ENCODE measurements at regions of chr3 and their contacts with region 1.

Region 1: DNA sequence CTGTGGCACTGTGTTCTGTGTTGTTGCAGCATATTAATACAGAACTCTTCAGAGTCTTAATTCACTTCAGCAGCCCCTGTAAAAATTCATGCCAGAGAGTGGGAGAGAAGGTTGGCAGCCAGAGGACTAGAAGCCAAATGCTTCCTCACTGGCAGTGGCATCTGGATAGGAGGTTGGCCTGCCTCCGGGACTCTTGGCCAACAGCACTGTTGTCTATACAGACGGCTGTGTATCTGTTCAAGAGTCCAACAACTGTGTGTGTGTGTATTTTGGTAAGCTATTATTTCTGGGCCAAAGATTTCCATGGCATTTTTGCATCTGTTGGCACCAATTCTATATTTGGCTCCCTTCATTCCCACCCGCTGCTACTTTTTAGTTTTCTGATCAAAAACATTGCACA is 156.0 kb upstream of the SOX2 start:
- DNase-seq: peak; percentile 66
- ATAC-seq: peak; percentile 76

Region 2: DNA sequence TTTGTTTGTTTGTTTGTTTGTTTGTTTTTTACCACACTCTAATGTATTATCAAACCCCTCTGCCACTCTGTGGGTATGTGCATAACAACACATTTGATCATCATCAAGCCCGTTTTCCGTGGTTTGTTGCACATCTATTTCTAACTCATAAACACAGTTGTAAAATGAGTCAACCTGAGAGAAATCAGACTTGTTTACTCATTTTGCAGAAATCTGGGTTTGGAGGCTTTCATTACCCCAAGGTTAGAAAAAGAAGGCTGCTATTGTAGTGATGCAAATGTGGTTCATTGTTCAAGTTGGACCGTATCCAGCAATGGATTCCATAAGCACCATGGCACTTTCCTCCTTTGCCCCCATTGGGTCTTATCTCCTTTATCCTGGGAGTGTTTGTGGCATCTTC is 197.1 kb before region 1 on chr3:
- intact Hi-C with region 1: loop called (anchors 2 kb)
- DNase-seq: no peak
- ATAC-seq: no peak

Region 3: DNA sequence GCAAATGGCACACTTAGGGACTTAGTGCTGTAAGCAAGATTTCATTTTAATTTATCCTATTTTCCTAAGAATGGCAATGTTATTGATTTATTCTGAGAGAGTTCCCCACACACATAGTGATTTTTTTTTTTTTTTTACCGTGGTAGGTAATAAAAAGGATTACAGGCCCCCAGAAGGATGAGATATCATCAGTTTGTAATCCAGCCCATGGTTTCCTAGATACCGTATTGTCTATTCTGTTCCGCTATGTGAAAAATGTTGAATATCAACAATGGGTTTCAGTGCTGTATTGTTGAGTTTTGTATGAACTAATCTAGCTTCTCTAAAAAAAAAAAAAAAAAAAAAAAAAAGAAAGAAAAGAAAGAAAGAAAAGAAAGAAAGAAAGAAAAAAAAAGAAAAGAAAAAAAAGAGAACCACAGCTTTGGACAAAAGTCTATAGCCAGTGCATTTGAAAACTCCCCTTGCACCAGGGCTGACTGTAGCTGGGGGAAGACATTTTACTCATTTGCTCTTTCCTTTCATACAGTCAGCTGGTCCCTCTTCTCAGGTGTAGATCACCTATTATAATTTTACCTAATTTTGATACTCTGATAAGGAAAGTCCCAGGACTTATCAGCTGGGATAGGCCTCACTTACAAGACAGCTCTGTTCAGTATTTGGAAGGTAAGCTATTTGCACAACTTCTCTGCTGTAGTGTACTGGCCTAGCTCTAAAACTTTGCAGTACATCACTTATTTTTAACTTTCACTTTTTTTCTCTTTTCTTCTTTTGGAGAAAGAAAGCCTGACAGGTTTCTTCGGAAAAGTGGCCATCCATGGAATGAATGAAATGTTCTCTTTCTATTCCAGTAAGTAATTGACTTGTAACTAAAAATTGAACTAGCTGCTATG is 54.6 kb after region 1 on chr3:
- intact Hi-C with region 1: no loop called
- DNase-seq: no peak
- ATAC-seq: no peak

Region 4: GRCh38 chr3:181694805-181695660 is 139.4 kb after region 1 on chr3:
- intact Hi-C with region 1: loop called (anchors 5 kb)
- DNase-seq: peak; percentile 76
- ATAC-seq: peak; percentile 90

Measured in Right ventricle myocardium inferior (tissue), 1 donor.